T-cell (primary cell): ENCODE measurements at regions of chr15 and their contacts with region 1.

Region 1: GRCh38 chr15:50590288-50590687 is 43.8 kb upstream of the USP50 start:
- DNase-seq: no peak
- ATAC-seq: no peak
- H3K4me3 ChIP-seq: no peak overlapping the region
- H3K4me3 Mint-ChIP-seq: no peak overlapping the region
- H3K27ac ChIP-seq: no peak overlapping the region
- H3K27ac Mint-ChIP-seq: no peak overlapping the region
- H3K4me1 ChIP-seq: no peaks in the 10 kb centered on the region
- H3K4me1 Mint-ChIP-seq: no peaks in the 10 kb centered on the region
- H3K27me3 ChIP-seq: no peaks in the 10 kb centered on the region
- H3K27me3 Mint-ChIP-seq: no peaks in the 10 kb centered on the region

Region 2: DNA sequence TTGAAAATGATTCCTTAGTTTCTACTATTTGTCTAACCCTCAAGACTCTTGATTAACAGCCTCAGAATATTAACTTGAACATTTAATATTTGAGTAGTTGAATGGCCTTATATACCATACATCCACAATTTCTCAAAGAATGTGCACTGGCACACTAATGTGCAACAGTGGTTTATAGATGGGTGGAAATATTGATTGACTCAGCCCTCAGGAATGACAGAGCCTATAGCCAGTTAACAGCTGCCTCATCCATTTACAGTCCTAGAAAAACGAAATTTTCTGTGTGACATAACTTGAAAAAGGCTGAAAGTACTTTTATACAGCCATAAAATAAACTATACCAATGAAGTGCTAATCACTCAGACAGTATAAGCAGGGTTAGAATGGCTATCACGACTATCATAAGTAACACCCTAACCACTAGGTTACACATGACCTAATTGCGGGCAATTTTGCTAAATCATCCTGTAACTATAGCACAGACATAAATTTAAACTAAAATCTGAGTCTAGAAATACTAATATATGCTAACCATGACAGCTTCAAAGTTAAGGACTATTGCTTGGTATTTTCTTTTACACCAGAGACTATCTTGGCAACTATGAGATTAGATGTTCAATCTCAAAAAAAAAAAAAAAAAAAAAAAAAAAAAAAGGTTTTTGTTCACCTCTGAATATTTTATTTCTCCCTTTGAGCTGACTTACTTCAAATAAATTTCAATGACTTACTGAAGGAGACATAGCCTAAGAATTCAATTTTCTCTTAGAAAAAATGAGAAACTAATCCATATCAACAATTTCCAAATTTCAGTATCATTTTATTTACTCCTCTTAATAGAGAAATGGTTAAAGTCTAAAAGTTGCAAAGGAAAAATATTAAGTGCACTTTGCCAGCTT is 1553.4 kb before region 1 on chr15:
- CTCF ChIA-PET with region 1: no interaction called
- POLR2A ChIA-PET with region 1: interaction called in 1 of 2 experiments, 10 read pairs
- DNase-seq: peak in 2 of 35 experiments; percentile 3 to 41
- ATAC-seq: peak in 2 of 4 experiments; percentile 31 to 52
- H3K4me3 ChIP-seq: no peak overlapping the region
- H3K4me3 Mint-ChIP-seq: no peak overlapping the region
- H3K27ac ChIP-seq: no peak overlapping the region
- H3K27ac Mint-ChIP-seq: no peak overlapping the region
- H3K4me1 ChIP-seq: no peaks in the 10 kb centered on the region
- H3K4me1 Mint-ChIP-seq: peaks cover 30 to 49% (median 43%) of the 10 kb centered on the region in 3 donors
- H3K27me3 ChIP-seq: no peaks in the 10 kb centered on the region
- H3K27me3 Mint-ChIP-seq: no peaks in the 10 kb centered on the region